Ascending aorta (tissue), 2 donors: ENCODE measurements at regions of chr19 and their contacts with region 1.

Region 1: GRCh38 chr19:28737021-28737895 is 475.7 kb downstream of the UQCRFS1 start:
- DNase-seq: no peak
- H3K4me3 ChIP-seq: peak overlapping the region in 1 of 2 donors; percentile 34
- H3K27ac ChIP-seq: no peak overlapping the region
- H3K4me1 ChIP-seq: peaks cover 0 to 6% of the 10 kb centered on the region in 2 donors
- H3K27me3 ChIP-seq: no peaks in the 10 kb centered on the region
- CTCF ChIP-seq: peak in 2 of 3 experiments; percentile 19 to 54

Region 2: DNA sequence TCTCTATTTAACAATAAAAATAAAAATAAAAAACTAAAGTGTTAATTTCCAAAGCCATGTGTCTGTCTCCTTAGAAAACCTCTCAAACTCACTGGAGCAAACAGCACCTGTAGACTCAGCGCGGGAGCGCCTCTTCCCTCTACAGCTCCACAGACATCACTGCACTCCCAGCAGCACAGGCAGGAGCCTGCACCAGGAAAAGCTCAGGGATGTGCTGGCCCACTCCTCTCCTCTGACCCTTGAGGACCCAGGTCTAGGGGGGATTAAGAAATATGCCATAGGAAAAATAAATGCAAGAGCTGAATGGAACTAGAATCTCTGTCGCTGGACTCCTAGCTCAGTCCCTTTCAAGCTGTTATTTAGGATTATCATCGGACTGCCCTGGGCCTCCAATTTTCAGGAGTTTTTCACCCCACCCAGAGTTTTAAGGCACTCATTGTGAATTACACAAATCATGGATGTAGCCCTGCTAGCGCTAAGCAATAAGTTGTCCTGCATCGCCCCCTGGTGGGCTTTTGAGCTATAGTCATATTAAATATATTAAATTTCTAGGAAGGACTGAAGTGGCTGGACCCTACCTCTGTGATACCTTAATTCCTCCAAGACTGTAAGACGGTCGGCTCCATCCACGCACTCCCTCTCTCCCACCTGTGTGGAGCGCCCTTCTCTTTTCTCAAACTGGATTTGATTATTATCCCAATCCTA is 141.8 kb after region 1 on chr19:
- intact Hi-C with region 1: loop called (anchors 5 kb)
- DNase-seq: peak in 1 of 2 donors; percentile 74
- H3K4me3 ChIP-seq: no peak overlapping the region
- H3K27ac ChIP-seq: no peak overlapping the region
- H3K4me1 ChIP-seq: no peaks in the 10 kb centered on the region
- H3K27me3 ChIP-seq: no peaks in the 10 kb centered on the region
- CTCF ChIP-seq: peak; percentile 43 to 66 (median 49)

Region 3: DNA sequence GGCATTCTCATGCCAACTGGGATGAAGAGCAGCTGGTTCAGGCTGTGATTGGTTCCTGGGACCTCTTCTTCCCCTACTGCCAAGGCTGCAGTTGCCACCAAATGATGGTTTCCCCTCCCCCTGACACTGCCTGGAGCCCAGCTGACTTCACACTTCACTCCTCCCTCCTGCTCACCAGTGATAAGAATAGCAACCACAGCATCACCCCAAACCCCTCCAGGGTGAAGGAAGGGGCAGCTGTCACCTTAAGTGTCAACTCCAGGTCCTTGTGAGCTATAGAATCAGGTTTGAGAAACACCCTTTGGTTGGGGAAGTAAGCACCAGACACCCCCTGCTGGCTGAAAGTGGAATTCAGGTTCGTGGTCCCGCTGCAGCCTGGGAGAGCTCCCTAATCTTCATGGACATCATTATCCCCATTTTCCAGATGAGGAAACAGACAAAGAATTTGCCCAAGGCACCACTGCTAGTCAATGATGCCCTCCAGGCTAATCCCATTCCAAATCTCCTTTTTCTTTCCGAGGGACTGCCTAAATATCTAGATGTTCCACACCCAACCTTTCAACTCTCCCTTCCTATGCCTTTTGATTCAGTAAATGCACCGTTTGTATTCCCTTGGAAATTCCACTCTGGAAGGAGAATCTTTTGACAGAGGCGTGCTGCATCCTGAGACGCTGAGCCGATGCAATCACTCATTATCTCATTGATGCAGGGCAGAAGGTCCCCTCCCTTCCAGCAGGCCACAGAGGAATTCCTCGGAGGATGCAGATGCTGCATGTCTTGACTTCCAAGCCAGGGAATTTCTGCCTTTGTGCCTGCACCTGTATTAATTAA is 526.3 kb after region 1 on chr19:
- intact Hi-C with region 1: loop called (anchors 10 kb)
- DNase-seq: no peak
- H3K4me3 ChIP-seq: no peak overlapping the region
- H3K27ac ChIP-seq: no peak overlapping the region
- H3K4me1 ChIP-seq: no peaks in the 10 kb centered on the region
- H3K27me3 ChIP-seq: no peaks in the 10 kb centered on the region
- CTCF ChIP-seq: peak; percentile 8 to 54 (median 32)